ENCODE measurements at regions of chr15 and their contacts with region 1.

Region 1: DNA sequence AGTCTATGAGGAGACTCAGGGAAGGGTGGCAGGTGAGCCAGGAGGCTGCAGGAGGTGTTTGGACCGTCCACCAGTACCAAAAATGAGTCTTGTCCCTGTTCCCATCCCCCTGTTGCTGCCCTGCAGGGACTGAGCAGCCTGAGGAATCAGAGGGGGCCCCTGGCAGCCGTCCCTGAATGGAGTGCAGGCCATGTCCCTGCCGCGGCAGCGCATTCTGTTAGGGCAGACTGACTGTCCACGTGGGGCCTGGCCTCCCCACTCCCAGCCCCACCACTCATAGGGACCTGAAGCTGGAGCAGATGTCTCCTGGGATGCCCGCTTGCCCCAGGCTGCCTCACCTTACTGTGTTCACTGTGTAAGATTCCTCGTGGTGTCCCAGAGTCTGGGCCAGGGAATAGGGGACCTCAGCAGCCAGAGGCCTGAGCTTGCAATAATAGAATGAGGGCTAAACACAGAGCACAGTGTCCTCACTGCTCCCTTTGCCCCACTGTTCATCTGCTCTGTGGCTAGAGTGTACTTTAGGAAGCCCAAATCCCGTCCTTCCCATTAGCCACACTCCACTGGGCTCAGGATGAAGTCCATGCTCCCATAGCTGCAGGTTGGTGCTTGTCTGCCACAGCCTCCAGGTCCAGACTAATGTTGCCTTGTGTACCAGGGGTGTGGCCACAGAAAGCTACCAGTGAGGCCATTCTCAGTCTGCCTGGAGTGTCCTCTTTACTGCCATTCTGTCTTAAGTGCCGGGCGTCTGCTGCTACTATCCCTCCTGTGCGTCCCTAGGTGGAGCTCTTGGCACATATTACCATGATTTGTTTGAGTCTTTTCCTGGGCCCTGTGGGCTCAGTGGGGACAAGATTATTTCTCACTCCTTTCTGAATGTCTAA is 63.2 kb downstream of the HCN4 start:
- DNase-seq: peak; percentile 65 to 67
- H3K4me3 ChIP-seq: no peak overlapping the region
- H3K4me3 Mint-ChIP-seq: no peak overlapping the region
- H3K27ac Mint-ChIP-seq: no peak overlapping the region
- H3K4me1 ChIP-seq: no peaks in the 10 kb centered on the region
- H3K4me1 Mint-ChIP-seq: no peaks in the 10 kb centered on the region
- H3K27me3 ChIP-seq: no peaks in the 10 kb centered on the region
- H3K27me3 Mint-ChIP-seq: no peaks in the 10 kb centered on the region
- CTCF ChIP-seq: peak; percentile 74 to 77

Region 2: GRCh38 chr15:72800833-72801480 is 504.6 kb before region 1 on chr15:
- CTCF ChIA-PET with region 1: no interaction called
- POLR2A ChIA-PET with region 1: no interaction called
- intact Hi-C with region 1: no loop called
- DNase-seq: no peak
- H3K4me3 ChIP-seq: no peak overlapping the region
- H3K4me3 Mint-ChIP-seq: no peak overlapping the region
- H3K27ac Mint-ChIP-seq: no peak overlapping the region
- H3K4me1 ChIP-seq: no peaks in the 10 kb centered on the region
- H3K4me1 Mint-ChIP-seq: peaks cover 12% of the 10 kb centered on the region
- H3K27me3 ChIP-seq: no peaks in the 10 kb centered on the region
- H3K27me3 Mint-ChIP-seq: peaks cover 6% of the 10 kb centered on the region
- CTCF ChIP-seq: no peak

Region 3: GRCh38 chr15:73284090-73284716 is 21.4 kb before region 1 on chr15:
- CTCF ChIA-PET with region 1: no interaction called
- POLR2A ChIA-PET with region 1: no interaction called
- intact Hi-C with region 1: no loop called
- DNase-seq: no peak
- H3K4me3 ChIP-seq: no peak overlapping the region
- H3K4me3 Mint-ChIP-seq: no peak overlapping the region
- H3K27ac Mint-ChIP-seq: no peak overlapping the region
- H3K4me1 ChIP-seq: no peaks in the 10 kb centered on the region
- H3K4me1 Mint-ChIP-seq: no peaks in the 10 kb centered on the region
- H3K27me3 ChIP-seq: no peaks in the 10 kb centered on the region
- H3K27me3 Mint-ChIP-seq: no peaks in the 10 kb centered on the region
- CTCF ChIP-seq: no peak

Region 4: DNA sequence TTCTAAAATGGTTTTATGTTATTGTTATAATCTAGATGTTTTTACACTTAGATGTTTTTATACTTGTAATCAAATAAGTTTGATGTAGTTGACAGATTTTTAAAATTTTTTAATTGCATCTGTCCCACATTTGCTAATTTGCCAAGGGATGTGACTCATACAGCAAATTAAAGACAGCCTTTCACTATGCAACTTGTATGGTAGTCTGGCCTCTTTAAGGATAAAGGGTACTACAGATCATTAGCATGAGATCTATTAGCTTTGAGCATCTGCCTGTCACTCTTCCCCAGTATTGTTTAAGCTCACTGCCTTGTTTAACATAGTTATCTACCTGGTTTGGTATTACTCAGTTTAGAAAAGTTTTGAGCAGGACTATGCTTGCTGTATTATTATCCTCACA is 244.6 kb after region 1 on chr15:
- CTCF ChIA-PET with region 1: no interaction called
- POLR2A ChIA-PET with region 1: no interaction called
- intact Hi-C with region 1: loop called (anchors 5 kb)
- DNase-seq: no peak
- H3K4me3 ChIP-seq: no peak overlapping the region
- H3K4me3 Mint-ChIP-seq: no peak overlapping the region
- H3K27ac Mint-ChIP-seq: no peak overlapping the region
- H3K4me1 ChIP-seq: no peaks in the 10 kb centered on the region
- H3K4me1 Mint-ChIP-seq: no peaks in the 10 kb centered on the region
- H3K27me3 ChIP-seq: no peaks in the 10 kb centered on the region
- H3K27me3 Mint-ChIP-seq: no peaks in the 10 kb centered on the region
- CTCF ChIP-seq: no peak